ENCODE measurements at regions of chr11 and their contacts with region 1.

Region 1: GRCh38 chr11:1309498-1310317 is at the start of gene TOLLIP:
- DNase-seq: peak; percentile 99 to 100
- ATAC-seq: peak; percentile 77 to 90 (median 81)
- H3K4me3 ChIP-seq: peak within 1 kb of the TSS; percentile 85
- H3K4me3 Mint-ChIP-seq: peak within 1 kb of the TSS; percentile 92
- H3K27ac ChIP-seq: peak within 1 kb of the TSS; percentile 96
- H3K27ac Mint-ChIP-seq: peak within 1 kb of the TSS; percentile 90 to 92
- H3K4me1 ChIP-seq: peaks cover 52% of the 10 kb centered on the region
- H3K4me1 Mint-ChIP-seq: peaks cover 33 to 42% of the 10 kb centered on the region in 2 donors
- H3K27me3 ChIP-seq: no peaks in the 10 kb centered on the region
- H3K27me3 Mint-ChIP-seq: peaks cover 0 to 7% of the 10 kb centered on the region in 2 donors
- CTCF ChIP-seq: no peak
- total RNA-seq, gene TOLLIP: 49.3 to 61.8 (median 54.8) TPM

Region 2: DNA sequence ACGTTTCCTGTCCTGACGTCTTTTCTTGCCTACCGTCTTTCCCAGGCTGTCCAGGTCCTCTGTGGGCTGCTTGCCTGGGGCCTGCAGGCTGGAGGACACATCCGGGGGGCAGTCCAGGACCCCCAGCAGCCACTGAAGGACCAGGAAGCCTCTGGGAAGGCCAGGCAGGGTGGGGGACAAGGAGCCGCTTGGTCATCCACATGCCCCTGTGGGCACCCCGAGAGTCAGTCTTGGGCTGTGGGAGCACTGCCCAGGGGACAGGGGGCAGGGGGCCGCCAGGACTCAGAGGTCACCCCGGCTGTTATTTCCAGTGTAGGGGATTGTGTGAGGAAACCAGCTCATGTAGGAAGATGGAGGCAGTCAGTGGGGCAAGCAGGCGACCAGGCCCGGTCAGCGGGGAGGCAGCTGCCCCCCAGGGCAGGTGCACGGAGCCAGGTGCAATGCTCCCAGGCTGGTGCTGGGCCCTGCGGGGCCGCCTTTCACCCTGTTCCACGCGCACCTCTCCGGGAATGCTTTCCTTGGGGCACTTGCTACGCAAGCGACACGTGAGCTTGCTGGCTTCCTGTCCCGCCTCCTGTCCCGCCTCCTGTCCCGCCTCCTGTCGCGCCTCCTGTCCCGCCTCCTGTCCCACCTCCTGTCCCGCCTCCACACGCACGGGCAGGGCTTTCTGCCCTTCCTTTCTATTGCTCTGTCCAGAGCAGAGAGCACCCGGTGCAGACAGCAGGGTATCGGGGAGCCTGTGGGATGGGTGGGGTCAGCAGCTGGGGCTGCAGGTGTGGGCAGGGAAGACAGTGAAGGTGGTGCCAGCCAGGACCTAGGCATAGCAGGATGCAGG is 47.3 kb before region 1 on chr11:
- intact Hi-C with region 1: loop called (anchors 1 kb)
- DNase-seq: peak; percentile 82 to 90
- ATAC-seq: peak; percentile 91 to 92 (median 92)
- H3K4me3 ChIP-seq: peak overlapping the region; percentile 56
- H3K4me3 Mint-ChIP-seq: peak overlapping the region; percentile 80
- H3K27ac ChIP-seq: peak overlapping the region; percentile 73
- H3K27ac Mint-ChIP-seq: peak overlapping the region; percentile 67 to 89
- H3K4me1 ChIP-seq: peaks cover 17% of the 10 kb centered on the region
- H3K4me1 Mint-ChIP-seq: peaks cover 6 to 16% of the 10 kb centered on the region in 2 donors
- H3K27me3 ChIP-seq: no peaks in the 10 kb centered on the region
- H3K27me3 Mint-ChIP-seq: no peaks in the 10 kb centered on the region
- CTCF ChIP-seq: no peak

Region 3: GRCh38 chr11:1335811-1336761 is 26.4 kb after region 1 on chr11:
- intact Hi-C with region 1: loop called (anchors 1 kb)
- DNase-seq: peak; percentile 57 to 82
- ATAC-seq: peak; percentile 60 to 75 (median 62)
- H3K4me3 ChIP-seq: peak overlapping the region; percentile 49
- H3K4me3 Mint-ChIP-seq: peak overlapping the region; percentile 79
- H3K27ac ChIP-seq: peak overlapping the region; percentile 36
- H3K27ac Mint-ChIP-seq: peak overlapping the region in 1 of 2 donors; percentile 44
- H3K4me1 ChIP-seq: peaks cover 12% of the 10 kb centered on the region
- H3K4me1 Mint-ChIP-seq: peaks cover 12 to 23% of the 10 kb centered on the region in 2 donors
- H3K27me3 ChIP-seq: no peaks in the 10 kb centered on the region
- H3K27me3 Mint-ChIP-seq: peaks cover 0 to 3% of the 10 kb centered on the region in 2 donors
- CTCF ChIP-seq: no peak

Region 4: GRCh38 chr11:1382831-1383607 is 73.3 kb after region 1 on chr11:
- intact Hi-C with region 1: loop called (anchors 5 kb)
- DNase-seq: peak; percentile 68 to 91
- ATAC-seq: peak; percentile 86 to 89 (median 87)
- H3K4me3 ChIP-seq: peak overlapping the region; percentile 63
- H3K4me3 Mint-ChIP-seq: peak overlapping the region; percentile 84
- H3K27ac ChIP-seq: peak overlapping the region; percentile 95
- H3K27ac Mint-ChIP-seq: peak overlapping the region; percentile 57 to 87
- H3K4me1 ChIP-seq: peaks cover 18% of the 10 kb centered on the region
- H3K4me1 Mint-ChIP-seq: peaks cover 0 to 18% of the 10 kb centered on the region in 2 donors
- H3K27me3 ChIP-seq: no peaks in the 10 kb centered on the region
- H3K27me3 Mint-ChIP-seq: peaks cover 0 to 14% of the 10 kb centered on the region in 2 donors
- CTCF ChIP-seq: no peak

Region 5: GRCh38 chr11:1896923-1897322 is 587.2 kb after region 1 on chr11:
- intact Hi-C with region 1: no loop called
- DNase-seq: no peak
- ATAC-seq: no peak
- H3K4me3 ChIP-seq: no peak overlapping the region
- H3K4me3 Mint-ChIP-seq: no peak overlapping the region
- H3K27ac ChIP-seq: no peak overlapping the region
- H3K27ac Mint-ChIP-seq: no peak overlapping the region
- H3K4me1 ChIP-seq: peaks cover 7% of the 10 kb centered on the region
- H3K4me1 Mint-ChIP-seq: peaks cover 4 to 20% of the 10 kb centered on the region in 2 donors
- H3K27me3 ChIP-seq: peaks cover 4% of the 10 kb centered on the region
- H3K27me3 Mint-ChIP-seq: peaks cover 11 to 23% of the 10 kb centered on the region in 2 donors
- CTCF ChIP-seq: no peak

Measured in natural killer cell (primary cell).